OCI-LY7 (cell line): ENCODE measurements at regions of chr2 and their contacts with region 1.

Region 1: DNA sequence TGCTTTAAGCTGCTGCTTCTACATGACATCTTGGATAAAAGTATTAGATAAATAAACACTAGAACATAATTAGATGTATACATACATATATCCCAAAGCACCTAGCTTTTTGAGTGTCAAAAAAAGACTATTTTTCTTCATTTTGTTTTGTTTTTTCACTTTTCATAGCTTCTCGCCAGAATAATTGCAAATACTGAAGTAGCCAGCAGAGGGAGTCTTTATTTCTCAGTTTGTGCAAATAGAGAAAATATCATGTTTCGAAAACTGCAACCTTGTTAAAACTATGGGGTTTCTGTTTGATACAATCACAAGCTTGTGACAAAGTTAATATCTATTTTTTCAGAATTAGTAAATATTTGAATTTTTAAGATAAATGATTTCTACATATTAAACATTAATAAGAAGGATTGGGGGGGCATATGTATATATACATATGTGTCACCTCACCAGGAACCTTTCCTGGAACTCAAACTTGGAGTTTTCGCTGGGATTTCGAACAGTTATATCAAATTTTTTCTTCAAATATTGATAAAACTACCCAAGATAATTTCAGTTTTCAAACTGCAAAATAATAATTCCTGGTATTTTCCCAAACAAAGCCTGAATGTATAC is 61.0 kb downstream of the GRB14 start:
- DNase-seq: peak; percentile 19
- H3K4me3 ChIP-seq: no peak overlapping the region
- H3K27ac ChIP-seq: no peak overlapping the region
- H3K4me1 ChIP-seq: no peaks in the 10 kb centered on the region
- CTCF ChIP-seq: peak; percentile 87

Region 2: DNA sequence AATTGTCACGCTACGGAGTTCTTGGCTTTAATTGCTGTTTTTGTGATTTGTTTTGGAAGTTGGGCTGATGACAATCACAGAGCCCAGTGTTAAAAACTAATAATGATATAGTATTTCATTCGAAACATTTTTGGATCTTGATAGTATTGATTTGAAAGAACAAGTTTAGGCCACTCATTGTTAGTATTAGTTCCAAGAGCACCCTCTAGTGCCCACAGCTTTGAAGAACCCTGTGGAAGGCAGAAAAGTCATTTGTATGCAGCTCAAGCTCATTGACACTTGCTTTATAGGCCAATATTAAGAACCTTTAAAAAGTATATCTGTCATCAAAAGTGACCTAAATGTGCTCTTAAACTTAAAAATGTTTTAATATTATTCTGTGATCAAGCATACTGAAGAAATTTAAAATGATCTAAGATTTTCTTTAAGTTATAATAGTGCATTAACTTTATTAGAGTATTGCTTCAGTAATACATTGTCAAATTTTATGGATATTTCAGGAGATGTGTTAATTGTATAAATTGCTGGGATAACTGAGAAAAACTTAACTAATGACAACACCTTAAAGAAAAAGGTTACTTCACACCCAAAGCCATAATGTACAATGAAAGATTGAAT is 130.0 kb before region 1 on chr2:
- CTCF ChIA-PET with region 1: no interaction called
- POLR2A ChIA-PET with region 1: no interaction called
- intact Hi-C with region 1: no loop called
- DNase-seq: peak; percentile 19
- H3K4me3 ChIP-seq: no peak overlapping the region
- H3K27ac ChIP-seq: no peak overlapping the region
- H3K4me1 ChIP-seq: no peaks in the 10 kb centered on the region
- CTCF ChIP-seq: peak; percentile 81

Region 3: GRCh38 chr2:164717000-164717803 is 156.9 kb after region 1 on chr2:
- CTCF ChIA-PET with region 1: no interaction called
- POLR2A ChIA-PET with region 1: no interaction called
- intact Hi-C with region 1: loop called (anchors 5 kb)
- DNase-seq: peak; percentile 38
- H3K4me3 ChIP-seq: no peak overlapping the region
- H3K27ac ChIP-seq: no peak overlapping the region
- H3K4me1 ChIP-seq: no peaks in the 10 kb centered on the region
- CTCF ChIP-seq: peak; percentile 94

Region 4: DNA sequence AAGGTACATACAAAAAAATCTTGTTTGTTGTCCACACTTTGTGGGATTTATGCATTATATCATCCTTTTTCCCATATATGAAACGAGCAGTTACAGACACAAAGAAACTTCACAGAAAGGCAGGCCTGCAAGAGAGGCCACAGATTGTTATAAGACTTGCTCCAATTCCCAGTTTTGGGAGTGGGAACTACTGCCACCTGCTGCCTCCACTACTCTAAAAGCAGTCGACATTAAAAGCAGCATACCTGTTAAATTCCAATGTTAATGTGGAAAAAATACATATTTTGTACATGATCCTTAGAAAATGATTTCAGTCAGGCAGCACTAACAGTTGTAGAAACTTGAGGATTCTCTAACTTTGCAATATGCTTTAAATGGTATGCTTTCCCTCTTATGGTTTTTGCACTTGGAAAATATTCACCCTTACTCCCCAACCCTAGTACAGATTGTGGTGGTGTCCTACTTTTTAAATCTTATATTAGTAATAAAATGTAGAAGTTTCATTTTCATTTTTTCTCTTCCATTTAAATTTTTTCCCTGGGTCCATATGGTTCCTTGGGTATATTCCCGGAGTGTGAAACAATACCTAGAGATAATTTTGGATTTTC is 357.1 kb after region 1 on chr2:
- CTCF ChIA-PET with region 1: no interaction called
- POLR2A ChIA-PET with region 1: no interaction called
- intact Hi-C with region 1: loop called (anchors 10 kb)
- DNase-seq: peak; percentile 16
- H3K4me3 ChIP-seq: no peak overlapping the region
- H3K27ac ChIP-seq: no peak overlapping the region
- H3K4me1 ChIP-seq: no peaks in the 10 kb centered on the region
- CTCF ChIP-seq: peak; percentile 60